GM23248 (cell line): ENCODE measurements at regions of chr11 and their contacts with region 1.

Region 1: GRCh38 chr11:103594283-103594682 is 442.2 kb upstream of the DDI1 start:
- DNase-seq: no peak
- H3K4me3 ChIP-seq: no peak overlapping the region
- H3K27ac ChIP-seq: no peak overlapping the region
- H3K4me1 ChIP-seq: no peaks in the 10 kb centered on the region
- H3K27me3 ChIP-seq: no peaks in the 10 kb centered on the region

Region 2: GRCh38 chr11:103326070-103326794 is 268.1 kb before region 1 on chr11:
- in situ Hi-C with region 1: loop called (anchors 10 kb)
- DNase-seq: peak; percentile 85
- H3K4me3 ChIP-seq: peak overlapping the region; percentile 55
- H3K27ac ChIP-seq: 0 out of 2 replicates have a peak overlapping the region, but pooled peaks have one; percentile 34
- H3K4me1 ChIP-seq: peaks cover 10% of the 10 kb centered on the region; the same call in 1 of the 2 replicates
- H3K27me3 ChIP-seq: no peaks in the 10 kb centered on the region